AG04449 (cell line): ENCODE measurements at regions of chr16 and their contacts with region 1.

Region 1: DNA sequence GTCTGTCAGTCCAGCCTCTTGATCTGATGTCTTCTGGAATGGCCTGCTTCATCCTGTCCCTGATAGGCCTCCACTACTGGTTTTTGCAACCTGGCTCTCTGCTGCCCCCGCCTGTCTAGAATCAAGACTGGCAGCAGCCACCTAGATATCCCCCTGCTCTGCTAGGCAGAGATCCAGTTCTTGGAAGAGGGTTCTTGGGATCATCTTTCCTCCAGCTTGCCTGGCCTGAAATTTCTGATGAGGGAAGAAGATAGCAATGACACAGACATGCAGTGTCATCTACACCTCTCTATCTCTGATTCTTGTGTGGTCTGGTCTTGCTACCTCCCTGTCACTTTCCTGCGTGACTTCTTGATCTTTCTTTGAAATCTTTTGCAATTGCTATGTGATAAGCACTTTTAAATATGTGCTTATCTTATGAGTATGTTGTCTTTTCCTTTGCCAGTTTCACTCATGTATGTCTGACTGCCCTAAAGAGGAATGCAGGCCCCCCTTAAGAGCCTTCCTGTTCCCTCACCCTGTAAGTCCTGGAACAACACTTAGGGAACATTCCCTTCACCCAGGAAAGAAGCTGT is 20.3 kb upstream of the NFATC3 start:
- DNase-seq: peak; percentile 80
- H3K4me3 ChIP-seq: no peak overlapping the region; the same call in 1 of the 2 replicates
- CTCF ChIP-seq: peak; percentile 78

Region 2: GRCh38 chr16:68040507-68041288 is 24.2 kb before region 1 on chr16:
- CTCF ChIA-PET with region 1: interaction called, 16 read pairs
- POLR2A ChIA-PET with region 1: interaction called, 4 read pairs
- DNase-seq: no peak
- H3K4me3 ChIP-seq: no peak overlapping the region
- CTCF ChIP-seq: peak; percentile 90

Region 3: DNA sequence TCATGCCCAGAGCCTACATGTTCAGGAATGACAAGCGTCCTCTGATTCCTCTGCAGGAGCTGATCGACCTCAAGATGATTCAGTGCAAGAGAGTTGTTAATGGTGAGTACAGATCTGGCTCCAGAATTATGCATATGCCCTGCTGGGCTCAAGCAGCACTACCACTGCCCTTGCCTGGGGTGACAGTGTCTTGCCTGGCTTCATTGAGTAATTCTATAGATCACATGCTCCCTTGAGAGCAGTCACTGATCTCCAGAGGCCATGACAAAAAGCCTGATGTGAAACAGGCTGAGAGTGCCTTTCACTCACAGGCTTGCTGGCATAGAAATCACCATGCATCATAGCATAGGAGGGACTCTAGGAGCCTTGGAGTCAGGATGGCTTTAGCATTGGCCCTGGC is 15.4 kb before region 1 on chr16:
- CTCF ChIA-PET with region 1: interaction called, 45 read pairs
- POLR2A ChIA-PET with region 1: interaction called, 4 read pairs
- DNase-seq: no peak
- H3K4me3 ChIP-seq: no peak overlapping the region
- CTCF ChIP-seq: no peak

Region 4: DNA sequence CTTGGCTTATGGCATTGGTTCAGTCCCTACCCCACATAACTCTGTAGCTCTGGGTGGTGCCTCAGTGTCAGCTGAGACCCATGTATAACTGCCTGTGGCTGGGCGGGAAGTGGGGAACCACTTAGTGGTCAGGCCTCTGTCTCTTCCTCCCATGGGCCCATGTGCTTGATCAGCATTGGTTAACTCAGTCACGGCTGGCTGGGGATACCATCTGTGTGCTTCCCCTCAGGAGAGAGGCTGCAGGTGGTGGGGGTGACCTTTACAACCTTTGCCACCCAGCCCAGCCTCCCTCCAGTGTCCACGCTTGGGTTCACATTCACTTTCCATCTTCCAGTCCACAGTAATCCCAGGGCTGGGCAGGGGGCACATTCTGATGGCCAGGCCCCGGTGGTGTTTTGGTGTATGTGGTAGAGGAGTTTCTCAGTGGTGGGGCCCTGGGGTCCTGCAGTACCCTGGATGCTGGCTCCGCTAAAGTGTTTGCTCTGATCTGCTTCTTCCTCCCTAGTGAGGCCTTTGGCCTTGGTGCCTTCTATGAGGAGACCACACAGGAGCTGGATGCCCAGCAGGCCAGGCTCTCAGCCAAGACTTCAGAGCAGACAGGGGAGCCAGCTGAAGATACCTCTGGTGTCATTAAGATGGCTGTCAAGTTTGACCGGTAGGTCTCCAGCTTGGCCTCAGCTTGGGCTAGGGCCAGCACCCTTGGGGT is 10.1 kb after region 1 on chr16:
- CTCF ChIA-PET with region 1: interaction called, 25 read pairs
- POLR2A ChIA-PET with region 1: no interaction called
- DNase-seq: no peak
- H3K4me3 ChIP-seq: no peak overlapping the region
- CTCF ChIP-seq: no peak

Region 5: DNA sequence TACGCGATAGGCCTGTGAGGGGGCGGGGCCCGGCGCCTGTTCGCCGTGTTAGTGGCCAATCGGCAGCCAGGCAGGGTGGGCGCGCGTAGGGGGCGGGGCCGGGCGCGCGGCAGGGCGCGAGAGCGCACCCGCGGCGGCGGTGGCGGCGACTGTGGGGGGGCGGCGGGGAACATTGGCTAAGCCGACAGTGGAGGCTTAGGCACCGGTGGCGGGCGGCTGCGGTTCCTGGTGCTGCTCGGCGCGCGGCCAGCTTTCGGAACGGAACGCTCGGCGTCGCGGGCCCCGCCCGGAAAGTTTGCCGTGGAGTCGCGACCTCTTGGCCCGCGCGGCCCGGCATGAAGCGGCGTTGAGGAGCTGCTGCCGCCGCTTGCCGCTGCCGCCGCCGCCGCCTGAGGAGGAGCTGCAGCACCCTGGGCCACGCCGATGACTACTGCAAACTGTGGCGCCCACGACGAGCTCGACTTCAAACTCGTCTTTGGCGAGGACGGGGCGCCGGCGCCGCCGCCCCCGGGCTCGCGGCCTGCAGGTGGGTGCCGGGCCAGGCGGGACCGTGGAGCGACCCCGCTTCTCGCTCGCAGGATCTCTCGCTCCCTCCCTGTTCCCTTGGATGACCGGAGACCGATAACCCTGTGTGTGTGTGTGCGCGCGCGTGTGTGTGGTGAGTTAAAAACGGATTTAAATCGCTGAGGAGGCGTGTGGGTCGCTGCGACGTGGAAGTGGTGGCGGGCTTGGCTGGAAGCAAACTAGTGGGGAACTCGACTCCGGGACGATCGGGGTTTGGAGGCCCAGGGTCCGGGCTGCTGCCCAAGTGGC is 20.6 kb after region 1 on chr16 and contains the start of gene NFATC3:
- CTCF ChIA-PET with region 1: interaction called, 39 read pairs
- POLR2A ChIA-PET with region 1: interaction called, 7 read pairs
- DNase-seq: peak; percentile 61
- H3K4me3 ChIP-seq: peak within 1 kb of the TSS; percentile 83
- CTCF ChIP-seq: peak; percentile 15

Region 6: DNA sequence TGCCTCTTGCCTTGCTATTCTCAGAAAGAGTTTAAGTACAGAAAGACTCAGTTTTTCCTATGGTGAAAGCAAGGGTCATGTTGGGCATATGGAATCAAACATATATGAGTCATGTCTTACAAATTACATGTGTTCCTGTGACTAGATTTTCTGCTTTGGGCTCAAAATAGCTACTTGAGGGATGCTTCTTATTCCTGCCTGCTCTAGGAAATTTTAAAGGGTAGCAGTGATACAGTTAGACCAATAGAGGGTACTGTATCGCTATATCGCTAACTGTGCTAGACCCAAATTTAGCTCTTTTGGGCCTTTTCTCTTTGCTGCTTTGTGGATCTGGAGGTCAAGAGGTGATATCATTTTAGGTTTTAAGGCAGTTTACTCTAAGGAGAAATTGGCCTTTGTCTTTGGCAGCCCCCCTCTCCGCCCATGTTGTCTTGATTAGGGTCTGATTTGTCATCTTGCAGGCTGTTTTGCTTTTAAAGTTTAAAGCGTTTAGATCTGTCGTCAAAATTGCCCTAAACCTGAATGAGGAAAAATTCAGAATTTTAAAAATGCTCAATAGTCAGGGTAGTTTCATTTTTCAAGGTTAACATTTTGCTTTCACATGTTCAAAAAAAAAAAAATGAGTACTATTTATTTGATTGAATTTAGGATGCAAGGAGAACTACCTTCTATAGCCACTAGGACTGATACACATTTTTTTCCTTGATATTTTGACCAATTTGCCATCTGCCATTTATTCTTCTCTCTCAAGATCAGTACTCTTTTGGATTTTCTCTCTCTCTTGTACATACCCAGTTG is 29.1 kb after region 1 on chr16:
- CTCF ChIA-PET with region 1: interaction called, 10 read pairs
- POLR2A ChIA-PET with region 1: no interaction called
- DNase-seq: no peak
- H3K4me3 ChIP-seq: no peak overlapping the region
- CTCF ChIP-seq: peak; percentile 46

Region 7: GRCh38 chr16:68229431-68230198 is 164.7 kb after region 1 on chr16:
- CTCF ChIA-PET with region 1: interaction called, 14 read pairs
- POLR2A ChIA-PET with region 1: no interaction called
- DNase-seq: peak; percentile 31
- H3K4me3 ChIP-seq: no peak overlapping the region
- CTCF ChIP-seq: peak; percentile 73